Right ventricle myocardium superior (tissue), 1 donor: ENCODE measurements at regions of chr7 and their contacts with region 1.

Region 1: GRCh38 chr7:3300651-3301378 is at the start of gene SDK1:
- DNase-seq: peak; percentile 95
- ATAC-seq: peak; percentile 98
- total RNA-seq, gene SDK1: 2.2 TPM

Region 2: DNA sequence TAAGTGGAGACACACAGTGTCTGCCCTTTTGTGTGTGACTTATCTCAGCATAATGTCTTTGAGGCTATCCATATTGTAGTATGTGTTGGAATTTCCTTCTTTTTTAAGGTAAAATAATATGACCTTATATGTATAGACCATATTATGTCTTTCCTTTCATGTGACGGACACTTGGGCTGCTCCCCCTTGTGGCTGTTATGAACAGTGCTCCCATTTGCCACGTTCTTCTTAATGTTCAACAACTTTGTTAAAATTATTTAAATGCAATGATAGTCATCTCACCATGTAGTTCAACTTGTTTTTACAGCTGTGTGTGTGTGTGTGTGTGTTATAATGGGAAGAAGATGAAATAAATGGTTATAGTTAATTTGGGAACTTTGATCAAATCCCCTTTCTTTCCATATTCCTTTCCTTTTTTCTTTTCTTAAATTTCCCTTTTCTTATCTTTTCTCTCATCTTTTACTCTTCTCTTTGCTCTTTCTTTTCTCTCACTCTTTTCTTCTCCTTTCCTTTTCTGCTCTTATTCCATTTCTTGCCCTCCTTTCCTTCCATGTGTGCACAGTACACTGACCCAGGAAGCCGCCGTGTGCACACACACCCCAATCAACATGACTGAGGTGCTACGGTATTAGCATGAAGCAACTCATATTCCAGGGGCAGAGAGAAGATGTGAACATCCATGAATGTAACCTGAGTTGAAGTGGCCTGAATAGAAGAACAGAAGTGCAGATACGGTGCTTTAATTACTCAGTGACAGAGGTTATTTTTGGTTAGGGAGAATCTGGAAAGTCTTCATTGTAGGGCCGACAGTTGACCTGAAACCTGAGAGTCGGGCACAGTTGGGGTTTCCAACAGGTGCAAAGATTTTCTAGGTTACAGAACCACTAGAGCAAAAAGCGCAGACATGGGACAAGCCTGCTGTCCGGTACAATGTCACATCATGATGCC is 596.9 kb after region 1 on chr7:
- intact Hi-C with region 1: loop called (anchors 10 kb)
- DNase-seq: no peak
- ATAC-seq: peak; percentile 71